Endothelial cell of umbilical vein (primary cell): ENCODE measurements at regions of chr19 and their contacts with region 1.

Region 1: GRCh38 chr19:3700221-3701032 is at the start of gene PIP5K1C:
- DNase-seq: peak; percentile 84
- H3K4me3 ChIP-seq: peak within 1 kb of the TSS; percentile 63 to 89 (median 81)
- H3K27ac ChIP-seq: peak within 1 kb of the TSS; percentile 70
- H3K4me1 ChIP-seq: peaks cover 8% of the 10 kb centered on the region
- H3K27me3 ChIP-seq: no peaks in the 10 kb centered on the region
- CTCF ChIP-seq: peak; percentile 73 to 80
- POLR2A ChIP-seq: peak; percentile 65
- total RNA-seq, gene PIP5K1C: 79.5 and 82.2 TPM in 2 replicates

Region 2: DNA sequence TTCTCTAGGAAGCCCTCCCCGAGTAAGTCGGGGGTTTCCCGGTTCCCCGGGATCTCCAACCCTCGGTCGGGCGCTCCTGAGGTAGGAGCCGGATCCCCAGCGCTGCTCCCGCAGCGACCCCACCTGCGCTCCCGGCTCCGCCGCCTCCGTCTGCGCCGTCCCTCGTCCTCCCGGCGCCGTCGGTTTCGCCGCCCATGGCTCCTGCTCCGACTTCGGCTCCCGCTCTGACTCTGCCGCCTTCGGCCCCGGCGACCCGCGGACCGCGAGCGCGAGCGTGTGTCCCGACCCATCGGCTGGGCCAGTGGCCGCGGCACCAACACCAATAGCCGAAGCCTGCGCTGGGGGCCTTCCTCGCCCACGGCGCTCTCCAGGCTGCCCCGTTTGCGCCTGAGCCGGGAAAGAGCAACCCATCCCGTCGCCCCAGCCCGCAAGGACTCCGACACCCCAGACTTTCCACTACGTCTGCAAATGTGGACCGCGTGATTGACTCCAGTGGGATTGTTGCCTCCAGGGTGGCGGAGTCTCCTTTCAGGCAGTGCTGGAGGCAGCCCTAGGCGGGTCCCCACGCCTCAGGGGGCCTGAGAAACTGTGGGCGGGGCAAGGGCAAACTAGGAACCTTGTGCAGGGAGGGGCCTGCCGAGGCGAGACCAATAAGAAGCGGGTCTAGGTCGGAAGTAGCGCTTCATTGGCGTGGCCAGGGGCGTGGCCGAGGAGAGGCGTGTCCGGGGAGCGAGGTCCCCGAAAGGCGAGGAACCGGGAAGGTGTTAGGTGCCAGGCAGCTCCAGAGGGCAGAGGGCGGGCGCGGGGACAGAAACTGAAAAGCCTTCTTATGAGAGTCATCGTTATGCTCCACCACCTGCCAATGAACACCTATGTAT is 73.7 kb before region 1 on chr19 and contains the start of gene CACTIN:
- CTCF ChIA-PET with region 1: no interaction called
- POLR2A ChIA-PET with region 1: no interaction called
- dilution Hi-C with region 1: no loop called
- intact Hi-C with region 1: loop called (anchors 10 kb)
- DNase-seq: peak; percentile 97
- H3K4me3 ChIP-seq: peak within 1 kb of the TSS; percentile 70 to 94 (median 88)
- H3K27ac ChIP-seq: peak within 1 kb of the TSS; percentile 93
- H3K4me1 ChIP-seq: peaks cover 14% of the 10 kb centered on the region
- H3K27me3 ChIP-seq: no peaks in the 10 kb centered on the region
- CTCF ChIP-seq: no peak
- POLR2A ChIP-seq: peak; percentile 77
- total RNA-seq, gene CACTIN: 36.1 and 36.4 TPM in 2 replicates

Region 3: GRCh38 chr19:3665681-3666544 is 34.5 kb before region 1 on chr19:
- CTCF ChIA-PET with region 1: interaction called, 66 read pairs
- POLR2A ChIA-PET with region 1: interaction called, 6 read pairs
- dilution Hi-C with region 1: no loop called
- intact Hi-C with region 1: loop called (anchors 1 kb)
- DNase-seq: peak; percentile 46
- H3K4me3 ChIP-seq: no peak overlapping the region
- H3K27ac ChIP-seq: no peak overlapping the region
- H3K4me1 ChIP-seq: peaks cover 10% of the 10 kb centered on the region
- H3K27me3 ChIP-seq: no peaks in the 10 kb centered on the region
- CTCF ChIP-seq: peak; percentile 66 to 90
- POLR2A ChIP-seq: no peak

Region 4: GRCh38 chr19:3670796-3671679 is 29.4 kb before region 1 on chr19:
- CTCF ChIA-PET with region 1: interaction called, 66 read pairs
- POLR2A ChIA-PET with region 1: interaction called, 6 read pairs
- dilution Hi-C with region 1: no loop called
- intact Hi-C with region 1: loop called (anchors 1 kb)
- DNase-seq: peak; percentile 84
- H3K4me3 ChIP-seq: peak overlapping the region in 2 of 3 experiments; percentile 4 to 15
- H3K27ac ChIP-seq: peak overlapping the region; percentile 98
- H3K4me1 ChIP-seq: peaks cover 28% of the 10 kb centered on the region
- H3K27me3 ChIP-seq: no peaks in the 10 kb centered on the region
- CTCF ChIP-seq: no peak
- POLR2A ChIP-seq: peak; percentile 45

Region 5: DNA sequence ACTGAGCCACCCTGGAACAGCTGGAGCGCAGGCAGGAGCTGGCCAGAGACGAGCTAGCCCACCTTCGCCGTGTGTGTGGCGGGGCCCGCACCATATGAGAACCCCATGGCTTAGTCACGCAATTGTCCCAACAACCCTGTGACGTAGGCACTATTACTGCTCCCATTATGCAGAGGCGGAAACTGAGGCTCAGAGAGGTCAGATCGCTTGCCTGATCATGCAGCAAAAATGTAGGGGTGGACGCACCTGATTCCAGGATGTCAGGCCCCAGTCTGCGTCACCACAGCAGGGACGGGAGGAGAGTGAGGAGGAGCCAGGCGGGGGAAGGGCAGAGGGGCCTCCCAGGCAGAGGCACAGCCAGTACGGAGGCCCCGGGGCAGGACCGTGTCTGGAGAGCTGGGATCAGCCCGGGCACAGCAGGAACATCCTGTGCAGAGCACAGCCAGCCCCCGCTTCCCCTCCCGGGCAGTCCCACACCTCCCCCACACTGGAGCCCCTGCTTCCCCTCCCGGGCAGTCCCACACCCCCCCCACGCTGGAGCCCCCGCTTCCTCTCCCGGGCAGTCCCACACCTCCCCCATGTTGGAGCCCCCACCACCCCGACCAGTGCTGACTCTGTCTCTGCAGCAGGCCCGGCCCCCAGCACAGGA is 16.9 kb before region 1 on chr19:
- CTCF ChIA-PET with region 1: interaction called, 6 read pairs
- POLR2A ChIA-PET with region 1: no interaction called
- dilution Hi-C with region 1: no loop called
- intact Hi-C with region 1: loop called (anchors 1 kb)
- DNase-seq: peak; percentile 92
- H3K4me3 ChIP-seq: no peak overlapping the region
- H3K27ac ChIP-seq: peak overlapping the region; percentile 90
- H3K4me1 ChIP-seq: peaks cover 15% of the 10 kb centered on the region
- H3K27me3 ChIP-seq: no peaks in the 10 kb centered on the region
- CTCF ChIP-seq: no peak
- POLR2A ChIP-seq: no peak

Region 6: GRCh38 chr19:3984908-3985642 is 284.6 kb after region 1 on chr19 and contains the start of gene EEF2:
- CTCF ChIA-PET with region 1: no interaction called
- POLR2A ChIA-PET with region 1: no interaction called
- dilution Hi-C with region 1: no loop called
- intact Hi-C with region 1: no loop called
- DNase-seq: peak; percentile 86
- H3K4me3 ChIP-seq: peak within 1 kb of the TSS; percentile 63 to 98 (median 97)
- H3K27ac ChIP-seq: peak within 1 kb of the TSS; percentile 90
- H3K4me1 ChIP-seq: peaks cover 31% of the 10 kb centered on the region
- H3K27me3 ChIP-seq: no peaks in the 10 kb centered on the region
- CTCF ChIP-seq: no peak
- POLR2A ChIP-seq: peak; percentile 99
- total RNA-seq, gene EEF2: 2,318 and 2,351 TPM in 2 replicates